Calu3 (cell line): ENCODE measurements at regions of chr11 and their contacts with region 1.

Region 1: GRCh38 chr11:66883016-66883968 is 26.4 kb downstream of the LRFN4 start:
- DNase-seq: peak; percentile 86
- H3K4me3 Mint-ChIP-seq: no peak overlapping the region
- H3K27ac Mint-ChIP-seq: peak overlapping the region; percentile 38
- H3K4me1 Mint-ChIP-seq: peaks cover 43% of the 10 kb centered on the region
- H3K27me3 Mint-ChIP-seq: no peaks in the 10 kb centered on the region
- CTCF ChIP-seq: peak; percentile 79

Region 2: GRCh38 chr11:66429983-66430602 is 453.2 kb before region 1 on chr11:
- CTCF ChIA-PET with region 1: no interaction called
- intact Hi-C with region 1: no loop called
- DNase-seq: peak; percentile 79
- H3K4me3 Mint-ChIP-seq: no peak overlapping the region
- H3K27ac Mint-ChIP-seq: no peak overlapping the region
- H3K4me1 Mint-ChIP-seq: no peaks in the 10 kb centered on the region
- H3K27me3 Mint-ChIP-seq: peaks cover 11% of the 10 kb centered on the region
- CTCF ChIP-seq: peak; percentile 89

Region 3: DNA sequence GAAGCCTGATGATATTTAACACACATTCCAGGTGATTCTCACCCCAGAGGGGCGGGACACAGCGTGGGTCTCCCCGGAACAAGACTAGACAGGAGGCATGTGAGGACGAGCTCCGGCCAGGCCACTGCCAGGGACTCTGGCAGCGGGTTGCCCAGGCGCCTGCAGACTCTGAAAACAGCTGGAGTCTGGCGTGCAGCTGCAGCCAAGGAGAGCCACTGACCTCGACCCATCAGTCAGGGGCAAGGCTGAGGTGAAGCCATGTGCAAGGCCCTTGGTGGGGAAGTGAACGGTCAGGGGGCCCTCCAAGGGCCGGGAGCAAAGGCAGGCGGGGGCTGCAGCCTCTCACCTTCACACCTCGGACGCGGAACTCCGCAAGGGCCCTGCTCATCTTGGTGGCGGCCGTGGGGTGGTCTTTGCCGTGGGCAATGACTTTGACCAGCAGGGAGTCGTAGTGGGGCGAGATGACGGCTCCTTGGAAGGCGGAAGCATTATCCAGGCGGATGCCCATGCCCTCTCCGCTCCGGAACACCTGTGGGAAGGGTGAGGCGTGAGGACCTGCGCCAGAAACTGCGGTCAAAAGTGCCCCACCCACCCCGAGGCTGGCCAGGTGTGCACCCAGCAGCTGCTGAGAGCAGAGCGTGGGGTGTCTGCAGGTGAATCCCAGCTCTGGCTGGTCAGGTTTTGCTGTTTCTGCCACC is 19.7 kb before region 1 on chr11:
- CTCF ChIA-PET with region 1: no interaction called
- intact Hi-C with region 1: loop called (anchors 2 kb)
- DNase-seq: no peak
- H3K4me3 Mint-ChIP-seq: no peak overlapping the region
- H3K27ac Mint-ChIP-seq: no peak overlapping the region
- H3K4me1 Mint-ChIP-seq: no peaks in the 10 kb centered on the region
- H3K27me3 Mint-ChIP-seq: no peaks in the 10 kb centered on the region
- CTCF ChIP-seq: no peak